Posterior cingulate gyrus (tissue), 11 donors: ENCODE measurements at regions of chr14 and their contacts with region 1.

Region 1: DNA sequence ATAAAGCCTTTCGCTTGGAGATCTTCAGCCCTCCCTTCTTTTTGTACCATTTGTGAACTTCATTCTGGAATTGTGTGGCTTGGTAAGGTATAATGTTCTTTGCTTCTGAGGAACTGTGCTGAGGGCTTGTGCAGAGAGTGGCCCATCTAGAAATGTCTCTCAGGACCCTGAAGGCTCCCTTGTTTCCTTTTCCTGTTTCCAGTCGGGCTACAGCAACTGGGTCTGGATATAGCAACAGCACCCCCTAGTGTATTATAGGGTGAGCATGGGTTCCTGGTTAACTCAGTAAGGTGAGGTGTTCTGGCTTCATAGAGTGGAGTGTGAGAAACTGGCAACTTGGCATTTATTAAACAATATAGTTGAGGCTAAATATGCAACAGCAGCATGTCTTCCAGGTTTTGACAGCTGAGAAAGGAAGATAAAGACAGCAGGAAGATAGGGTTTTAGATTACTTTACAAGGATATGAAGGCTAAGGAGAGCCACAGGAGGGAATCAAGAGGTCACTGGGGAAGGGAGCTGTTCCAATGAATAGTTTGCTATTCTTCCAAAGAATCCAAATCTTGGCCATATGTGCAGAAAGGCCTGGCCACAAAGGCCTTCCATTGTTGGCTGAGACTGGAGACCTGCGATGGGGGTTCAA is 49.1 kb upstream of the RNU6-8 start:
- DNase-seq: peak in 5 of 10 donors; percentile 24 to 68 (median 46)

Region 2: DNA sequence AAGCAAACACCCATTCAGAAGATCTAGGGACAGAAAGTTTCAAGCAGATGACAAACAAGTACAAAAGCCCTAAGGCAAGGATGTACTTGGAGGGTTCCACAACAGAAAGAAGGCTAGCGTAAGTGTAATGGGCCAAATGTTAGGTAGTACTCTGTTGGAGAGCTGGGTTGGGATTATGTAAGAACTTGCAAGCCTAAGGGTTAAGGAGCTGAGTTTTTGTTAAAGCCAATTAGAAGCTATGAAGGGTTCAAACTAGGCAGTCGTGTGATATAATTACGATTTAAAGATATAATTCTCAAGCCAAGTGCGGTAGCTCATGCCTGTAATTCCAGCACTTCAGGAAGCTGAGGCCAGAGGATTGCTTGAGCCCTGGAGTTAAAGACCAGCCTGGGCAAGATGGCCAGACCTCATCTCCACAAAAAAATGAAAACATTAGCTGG is 1085.9 kb before region 1 on chr14:
- intact Hi-C with region 1: no loop called
- DNase-seq: no peak

Region 3: GRCh38 chr14:31456841-31457664 is 795.1 kb before region 1 on chr14 and contains the start of gene DTD2:
- intact Hi-C with region 1: loop called (anchors 10 kb)
- DNase-seq: peak; percentile 92 to 99 (median 96)

Region 4: GRCh38 chr14:31926123-31926522 is 326.0 kb before region 1 on chr14:
- intact Hi-C with region 1: loop called (anchors 5 kb)
- DNase-seq: no peak

Region 5: DNA sequence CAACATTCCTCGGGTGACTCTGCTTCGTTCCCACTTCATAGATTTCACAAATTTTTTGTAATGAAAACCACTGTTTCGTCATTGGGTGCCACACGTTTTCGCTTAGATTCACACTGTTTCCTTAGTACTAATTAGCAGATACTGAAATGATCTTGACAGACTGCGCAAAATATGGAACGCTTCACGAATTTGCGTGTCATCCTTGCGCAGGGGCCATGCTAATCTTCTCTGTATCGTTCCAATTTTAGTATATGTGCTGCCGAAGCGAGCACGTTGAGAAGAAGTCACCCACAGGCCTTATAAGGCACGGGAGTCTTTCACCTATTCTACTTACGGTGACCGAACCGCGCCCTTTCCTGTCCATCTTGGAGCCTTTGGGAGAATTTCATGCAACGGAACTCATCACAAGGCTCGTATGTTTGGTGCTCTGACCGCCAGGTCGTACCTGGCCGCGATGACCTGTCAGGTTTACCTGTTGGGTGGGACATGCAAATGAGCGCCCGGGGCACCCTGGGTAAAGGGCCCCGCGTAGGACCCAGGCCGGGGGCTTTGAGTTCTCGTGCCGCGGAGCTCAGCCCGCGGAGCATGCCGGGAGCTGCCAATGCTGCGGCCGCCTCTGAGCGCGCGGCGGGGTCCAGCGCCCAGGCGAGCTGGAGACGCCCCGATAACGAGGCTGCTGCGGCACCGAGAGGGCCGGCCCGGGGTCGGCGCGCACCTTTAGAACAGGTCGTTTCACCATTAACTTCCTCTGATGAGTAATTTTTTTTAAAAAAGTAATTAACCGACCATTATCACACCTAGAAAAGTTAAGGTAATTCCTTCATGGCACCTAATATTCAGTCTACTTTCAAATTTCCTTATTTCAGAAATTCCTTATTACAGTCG is 48.9 kb before region 1 on chr14 and contains the start of gene RNU6-8:
- intact Hi-C with region 1: loop called (anchors 10 kb)
- DNase-seq: peak; percentile 70 to 98 (median 84)

Region 6: GRCh38 chr14:32374155-32374554 is 122.0 kb after region 1 on chr14:
- intact Hi-C with region 1: no loop called
- DNase-seq: no peak

Region 7: GRCh38 chr14:32469388-32470160 is 217.4 kb after region 1 on chr14:
- intact Hi-C with region 1: loop called (anchors 2 kb)
- DNase-seq: no peak